Naive thymus-derived CD4-positive, alpha-beta T cell (primary cell): ENCODE measurements at regions of chr2 and their contacts with region 1.

Region 1: GRCh38 chr2:157596992-157597681 is 31.5 kb downstream of the ACVR1C start:
- DNase-seq: peak; percentile 32 to 60 (median 53)
- ATAC-seq: peak; percentile 80
- H3K4me3 ChIP-seq: no peak overlapping the region
- H3K4me3 Mint-ChIP-seq: peak overlapping the region; percentile 61 to 81 (median 72)
- H3K27ac ChIP-seq: no peak overlapping the region
- H3K27ac Mint-ChIP-seq: peak overlapping the region in 2 of 9 donors; percentile 21 to 65
- H3K4me1 ChIP-seq: no peaks in the 10 kb centered on the region
- H3K4me1 Mint-ChIP-seq: peaks cover 9 to 30% (median 20%) of the 10 kb centered on the region in 7 donors
- H3K27me3 ChIP-seq: no peaks in the 10 kb centered on the region
- H3K27me3 Mint-ChIP-seq: peaks cover 0 to 37% (median 0%) of the 10 kb centered on the region in 5 donors

Region 2: GRCh38 chr2:157433394-157433793 is 163.7 kb before region 1 on chr2:
- CTCF ChIA-PET with region 1: no interaction called
- POLR2A ChIA-PET with region 1: no interaction called
- intact Hi-C with region 1: loop called in 1 of 2 experiments (anchors 5 kb)
- DNase-seq: peak in 2 of 9 donors; percentile 40 to 60
- ATAC-seq: peak; percentile 7
- H3K4me3 ChIP-seq: peak overlapping the region; percentile 60
- H3K4me3 Mint-ChIP-seq: peak overlapping the region; percentile 87 to 100 (median 97)
- H3K27ac ChIP-seq: peak overlapping the region; percentile 89
- H3K27ac Mint-ChIP-seq: peak overlapping the region; percentile 86 to 99 (median 96)
- H3K4me1 ChIP-seq: peaks cover 54 to 62% of the 10 kb centered on the region in 2 donors
- H3K4me1 Mint-ChIP-seq: peaks cover 61 to 89% (median 73%) of the 10 kb centered on the region in 7 donors
- H3K27me3 ChIP-seq: no peaks in the 10 kb centered on the region
- H3K27me3 Mint-ChIP-seq: no peaks in the 10 kb centered on the region

Region 3: GRCh38 chr2:157492189-157492773 is 104.9 kb before region 1 on chr2:
- CTCF ChIA-PET with region 1: interaction called, 11 read pairs
- POLR2A ChIA-PET with region 1: interaction called, 10 read pairs
- intact Hi-C with region 1: loop called (anchors 1 kb)
- DNase-seq: peak; percentile 41 to 79 (median 68)
- ATAC-seq: peak; percentile 91
- H3K4me3 ChIP-seq: no peak overlapping the region
- H3K4me3 Mint-ChIP-seq: peak overlapping the region in 6 of 10 donors; percentile 1 to 39 (median 14)
- H3K27ac ChIP-seq: no peak overlapping the region
- H3K27ac Mint-ChIP-seq: peak overlapping the region in 3 of 9 donors; percentile 9 to 19 (median 13)
- H3K4me1 ChIP-seq: peaks cover 0 to 21% of the 10 kb centered on the region in 2 donors
- H3K4me1 Mint-ChIP-seq: peaks cover 10 to 67% (median 59%) of the 10 kb centered on the region in 7 donors
- H3K27me3 ChIP-seq: no peaks in the 10 kb centered on the region
- H3K27me3 Mint-ChIP-seq: no peaks in the 10 kb centered on the region

Region 4: GRCh38 chr2:157497638-157498314 is 99.4 kb before region 1 on chr2:
- CTCF ChIA-PET with region 1: interaction called, 11 read pairs
- POLR2A ChIA-PET with region 1: no interaction called
- intact Hi-C with region 1: loop called (anchors 1 kb)
- DNase-seq: peak in 7 of 9 donors; percentile 13 to 61 (median 49)
- ATAC-seq: peak; percentile 94
- H3K4me3 ChIP-seq: no peak overlapping the region
- H3K4me3 Mint-ChIP-seq: no peak overlapping the region
- H3K27ac ChIP-seq: no peak overlapping the region
- H3K27ac Mint-ChIP-seq: peak overlapping the region in 1 of 9 donors; percentile 29
- H3K4me1 ChIP-seq: peaks cover 0 to 8% of the 10 kb centered on the region in 2 donors
- H3K4me1 Mint-ChIP-seq: peaks cover 8 to 40% (median 37%) of the 10 kb centered on the region in 7 donors
- H3K27me3 ChIP-seq: no peaks in the 10 kb centered on the region
- H3K27me3 Mint-ChIP-seq: no peaks in the 10 kb centered on the region

Region 5: GRCh38 chr2:157572725-157573124 is 24.4 kb before region 1 on chr2:
- CTCF ChIA-PET with region 1: no interaction called
- POLR2A ChIA-PET with region 1: no interaction called
- intact Hi-C with region 1: loop called in 1 of 2 experiments (anchors 2 kb)
- DNase-seq: peak in 5 of 9 donors; percentile 6 to 14 (median 10)
- ATAC-seq: peak; percentile 41
- H3K4me3 ChIP-seq: no peak overlapping the region
- H3K4me3 Mint-ChIP-seq: no peak overlapping the region
- H3K27ac ChIP-seq: no peak overlapping the region
- H3K27ac Mint-ChIP-seq: no peak overlapping the region
- H3K4me1 ChIP-seq: no peaks in the 10 kb centered on the region
- H3K4me1 Mint-ChIP-seq: peaks cover 0 to 12% (median 0%) of the 10 kb centered on the region in 7 donors
- H3K27me3 ChIP-seq: no peaks in the 10 kb centered on the region
- H3K27me3 Mint-ChIP-seq: no peaks in the 10 kb centered on the region

Region 6: DNA sequence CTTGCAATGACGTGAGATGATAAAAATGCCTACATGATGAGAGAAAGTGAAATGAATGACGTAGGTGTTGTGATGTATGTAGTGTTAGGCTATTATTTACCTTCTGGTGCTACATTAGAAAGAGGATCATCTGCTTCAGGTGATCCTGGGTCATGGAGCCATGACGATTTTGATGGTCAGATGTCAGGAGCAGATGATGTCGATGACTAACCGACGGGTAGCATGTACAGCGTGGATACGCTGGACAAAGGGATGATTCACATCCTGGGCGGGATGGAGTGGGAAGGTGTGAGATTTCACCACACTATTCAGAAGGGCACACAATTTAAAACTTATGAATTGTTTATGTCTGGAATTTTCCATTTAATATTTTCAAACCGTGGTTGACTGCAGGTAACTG is 75.0 kb after region 1 on chr2:
- CTCF ChIA-PET with region 1: no interaction called
- POLR2A ChIA-PET with region 1: no interaction called
- intact Hi-C with region 1: no loop called
- DNase-seq: no peak
- ATAC-seq: no peak
- H3K4me3 ChIP-seq: no peak overlapping the region
- H3K4me3 Mint-ChIP-seq: no peak overlapping the region
- H3K27ac ChIP-seq: no peak overlapping the region
- H3K27ac Mint-ChIP-seq: no peak overlapping the region
- H3K4me1 ChIP-seq: no peaks in the 10 kb centered on the region
- H3K4me1 Mint-ChIP-seq: no peaks in the 10 kb centered on the region
- H3K27me3 ChIP-seq: no peaks in the 10 kb centered on the region
- H3K27me3 Mint-ChIP-seq: peaks cover 0 to 11% (median 0%) of the 10 kb centered on the region in 5 donors